HEK293 (cell line): ENCODE measurements at regions of chr3 and their contacts with region 1.

Region 1: DNA sequence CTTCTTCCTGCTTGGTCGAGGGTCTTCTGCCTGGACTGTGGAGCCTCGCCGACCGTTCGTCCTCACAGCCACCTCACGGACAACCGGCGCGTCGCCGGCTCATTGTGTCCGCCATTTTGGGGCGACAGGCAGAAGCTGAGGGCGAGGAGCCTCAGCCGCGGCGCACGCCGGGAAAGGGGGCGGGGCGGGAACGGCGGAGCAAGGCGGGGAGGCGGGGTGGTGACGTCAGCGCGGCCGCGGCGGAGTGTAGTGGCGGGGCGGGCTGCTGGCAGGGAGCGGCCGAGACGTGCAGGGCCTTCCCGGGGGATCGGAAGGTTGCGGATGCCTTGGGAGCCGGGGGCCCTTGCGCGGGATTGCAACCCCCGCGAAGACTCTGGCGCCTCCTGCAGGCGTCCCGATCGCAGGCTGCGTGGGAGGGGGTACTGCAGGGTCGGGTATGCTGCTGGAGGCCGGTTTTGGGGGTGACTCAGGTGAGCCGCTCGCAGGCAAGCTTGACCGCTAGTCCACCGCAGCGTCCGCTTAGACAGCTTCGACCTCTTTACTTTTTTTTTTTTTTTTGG is at the start of gene WDR82:
- H3K4me3 ChIP-seq: peak within 1 kb of the TSS; percentile 82
- H3K27ac ChIP-seq: peak within 1 kb of the TSS; percentile 95
- H3K4me1 ChIP-seq: no peaks in the 10 kb centered on the region
- CTCF ChIP-seq: peak; percentile 75

Region 2: GRCh38 chr3:52128118-52128683 is 150.4 kb before region 1 on chr3:
- CTCF ChIA-PET with region 1: no interaction called
- POLR2A ChIA-PET with region 1: no interaction called
- H3K4me3 ChIP-seq: no peak overlapping the region
- H3K27ac ChIP-seq: peak overlapping the region; percentile 13; the same call in 1 of the 2 replicates
- H3K4me1 ChIP-seq: peaks cover 2% of the 10 kb centered on the region; the same call in 1 of the 2 replicates
- CTCF ChIP-seq: no peak

Region 3: GRCh38 chr3:52231502-52232293 is 46.9 kb before region 1 on chr3:
- CTCF ChIA-PET with region 1: interaction called, 19 read pairs
- POLR2A ChIA-PET with region 1: no interaction called
- H3K4me3 ChIP-seq: no peak overlapping the region
- H3K27ac ChIP-seq: no peak overlapping the region
- H3K4me1 ChIP-seq: no peaks in the 10 kb centered on the region
- CTCF ChIP-seq: peak; percentile 87

Region 4: DNA sequence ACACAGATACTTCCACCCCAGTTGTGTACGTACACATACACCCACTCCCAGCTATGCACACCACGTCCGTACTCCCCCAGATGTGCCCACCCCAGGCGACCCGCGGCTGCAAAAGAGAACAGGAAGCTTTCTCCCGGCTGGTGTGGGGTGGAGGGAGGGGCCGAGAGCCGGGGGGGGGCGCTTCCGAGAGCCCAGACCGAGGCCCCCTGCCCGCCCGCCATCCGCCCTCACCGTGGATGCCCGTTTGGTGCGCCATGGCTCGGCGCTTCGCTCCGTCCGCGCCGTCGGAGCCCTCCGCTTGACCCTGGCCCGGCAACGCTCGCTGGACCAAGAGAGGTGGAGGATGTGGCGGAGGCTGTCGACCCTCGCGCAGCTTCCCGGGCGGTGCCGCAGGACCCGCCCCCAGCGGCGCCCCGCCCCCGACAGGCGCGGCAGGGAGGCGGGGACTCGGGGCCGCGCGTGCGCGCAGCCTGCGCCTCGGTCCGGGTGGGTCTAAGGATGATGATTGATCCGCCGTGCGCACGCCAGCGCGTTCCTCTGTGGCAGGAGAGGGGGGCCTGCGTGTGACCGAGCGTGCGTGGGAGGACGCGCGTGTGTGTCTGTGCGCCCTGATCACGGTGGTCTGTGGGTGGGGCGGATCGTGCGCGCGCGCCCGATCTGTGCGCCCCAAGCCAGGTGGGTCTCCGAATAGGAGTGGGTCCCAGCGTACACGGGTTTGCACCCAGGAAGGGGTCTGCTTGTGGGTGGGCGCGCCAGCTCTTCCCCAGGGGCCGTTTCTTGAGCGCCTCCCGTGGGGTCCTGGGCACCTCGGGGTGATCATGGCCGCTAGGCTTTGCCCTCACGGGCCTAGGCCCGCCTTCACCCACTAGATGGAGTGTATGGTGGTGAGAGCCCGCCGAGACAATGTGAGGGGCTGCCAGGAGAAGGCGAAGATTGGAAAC is 39.6 kb before region 1 on chr3 and contains the start of gene TWF2:
- CTCF ChIA-PET with region 1: interaction called, 3 read pairs
- POLR2A ChIA-PET with region 1: interaction called, 14 read pairs
- H3K4me3 ChIP-seq: peak within 1 kb of the TSS; percentile 95
- H3K27ac ChIP-seq: peak within 1 kb of the TSS; percentile 73; the same call in 1 of the 2 replicates
- H3K4me1 ChIP-seq: no peaks in the 10 kb centered on the region
- CTCF ChIP-seq: peak; percentile 82

Region 5: GRCh38 chr3:52291508-52292181 is 13.1 kb after region 1 on chr3:
- CTCF ChIA-PET with region 1: interaction called, 4 read pairs
- POLR2A ChIA-PET with region 1: interaction called, 23 read pairs
- H3K4me3 ChIP-seq: no peak overlapping the region
- H3K27ac ChIP-seq: no peak overlapping the region
- H3K4me1 ChIP-seq: no peaks in the 10 kb centered on the region
- CTCF ChIP-seq: peak; percentile 45; the same call in 1 of the 2 replicates